Right ventricle myocardium inferior (tissue), 1 donor: ENCODE measurements at regions of chr2 and their contacts with region 1.

Region 1: GRCh38 chr2:30711646-30712085 is 95.6 kb downstream of the CAPN13 start:
- DNase-seq: peak; percentile 79
- ATAC-seq: peak; percentile 79

Region 2: GRCh38 chr2:30208452-30208851 is 503.2 kb before region 1 on chr2:
- intact Hi-C with region 1: loop called (anchors 1 kb)
- DNase-seq: no peak
- ATAC-seq: peak; percentile 90

Region 3: DNA sequence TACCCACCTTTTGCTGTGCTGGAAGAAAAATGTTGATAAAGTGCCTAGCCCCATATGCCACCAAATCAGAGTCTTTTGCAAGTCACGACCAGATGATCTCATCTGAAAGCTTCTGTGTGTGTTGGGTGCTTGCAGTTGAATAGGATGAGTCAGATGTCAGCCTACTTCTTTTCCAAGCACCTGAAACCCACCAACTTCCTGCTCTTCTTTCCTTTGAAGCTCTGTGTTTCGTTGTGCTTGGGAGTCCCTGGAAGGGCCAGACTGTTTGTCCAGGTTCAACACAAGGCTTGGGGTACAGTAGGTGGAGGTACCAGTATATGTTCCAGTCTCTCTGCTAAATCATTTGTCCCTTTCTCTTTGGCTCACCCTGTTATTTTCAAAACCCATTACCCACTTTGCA is 301.4 kb before region 1 on chr2:
- intact Hi-C with region 1: loop called (anchors 5 kb)
- DNase-seq: no peak
- ATAC-seq: no peak

Region 4: GRCh38 chr2:30862054-30862651 is 150.5 kb after region 1 on chr2:
- intact Hi-C with region 1: loop called (anchors 2 kb)
- DNase-seq: no peak
- ATAC-seq: no peak

Region 5: GRCh38 chr2:31233741-31234682 is 522.3 kb after region 1 on chr2 and contains the start of gene EHD3:
- intact Hi-C with region 1: loop called (anchors 10 kb)
- DNase-seq: peak; percentile 95
- ATAC-seq: peak; percentile 92
- total RNA-seq, gene EHD3: 27.9 TPM

Region 6: GRCh38 chr2:31523871-31524492 is 812.3 kb after region 1 on chr2:
- intact Hi-C with region 1: loop called (anchors 5 kb)
- DNase-seq: no peak
- ATAC-seq: no peak